GM13977 (cell line): ENCODE measurements at regions of chr20 and their contacts with region 1.

Region 1: DNA sequence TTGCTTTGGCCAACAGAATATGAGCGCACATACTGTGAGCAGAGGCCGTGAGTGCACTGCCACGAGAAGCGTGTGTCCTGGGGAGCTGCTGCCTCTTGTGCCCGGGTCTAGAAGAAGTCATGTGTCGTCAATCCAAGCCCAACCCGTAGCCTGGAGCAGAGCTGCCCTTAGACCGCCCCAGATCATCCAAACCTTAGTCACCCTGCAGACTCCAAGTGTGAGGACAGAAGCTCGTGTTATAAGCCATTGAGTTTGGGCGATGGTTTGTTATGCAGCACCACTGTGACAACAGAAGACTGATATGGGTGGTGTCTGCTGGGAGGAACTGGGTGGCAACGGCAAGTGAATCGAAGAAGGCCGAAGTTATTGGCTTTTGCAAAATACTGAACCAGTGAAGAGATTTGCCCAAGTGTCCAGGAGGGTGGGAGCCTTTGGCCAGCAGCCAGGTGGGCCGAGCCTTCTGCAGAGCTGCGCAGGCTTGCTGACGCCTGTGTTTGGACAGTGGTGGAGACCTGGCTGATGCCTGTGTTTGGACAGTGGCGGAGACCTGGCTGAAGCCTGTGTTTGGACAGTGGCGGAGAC is 101.3 kb upstream of the SULF2 start:
- DNase-seq: no peak
- CTCF ChIP-seq: no peak

Region 2: GRCh38 chr20:48523212-48523941 is 636.8 kb after region 1 on chr20:
- in situ Hi-C with region 1: loop called (anchors 5 kb)
- DNase-seq: peak; percentile 71
- CTCF ChIP-seq: no peak